ENCODE measurements at regions of chr1 and their contacts with region 1.

Region 1: DNA sequence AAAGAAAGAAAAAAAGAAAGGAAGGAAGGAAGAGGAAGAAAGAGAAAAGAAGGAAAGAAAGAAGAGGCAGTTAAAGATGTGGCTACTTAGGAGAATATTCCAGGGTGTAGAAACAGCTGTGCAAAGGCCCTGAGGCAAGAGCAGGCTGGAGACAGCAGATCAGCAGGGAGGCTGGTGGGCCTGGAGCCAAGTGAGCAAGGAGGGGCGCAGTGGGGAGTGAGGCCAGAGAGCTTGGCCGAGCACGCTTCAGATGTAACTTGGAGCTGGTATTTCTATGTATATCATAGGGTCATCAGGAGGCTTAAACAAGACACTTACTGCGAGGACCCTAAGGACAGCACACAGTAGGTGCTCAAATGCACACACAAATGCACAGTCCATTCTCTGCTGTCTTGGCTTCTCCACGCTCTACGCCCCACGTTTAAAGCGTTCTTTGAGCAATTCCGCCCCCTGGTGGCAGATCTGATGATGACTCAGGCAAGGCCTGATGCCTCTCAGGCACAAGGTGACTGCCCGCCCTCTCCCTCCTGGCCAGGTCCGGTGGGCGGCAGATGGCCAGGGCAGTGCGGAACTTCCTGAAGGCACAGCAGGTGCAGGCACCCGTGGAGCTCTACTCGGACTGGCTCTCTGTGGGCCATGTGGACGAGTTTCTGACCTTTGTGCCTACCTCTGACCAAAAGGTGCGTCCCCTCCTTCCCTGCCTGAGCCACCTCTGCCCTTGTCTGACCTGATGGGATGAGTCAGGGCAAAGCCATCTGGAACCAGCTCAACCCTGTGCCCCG is 11.9 kb upstream of the PADI3 start:
- DNase-seq: peak; percentile 97
- ATAC-seq: peak; percentile 42
- H3K4me3 ChIP-seq: no peak overlapping the region
- H3K27ac ChIP-seq: peak overlapping the region; percentile 7; the same call in 1 of the 2 replicates
- H3K4me1 ChIP-seq: peaks cover 33% of the 10 kb centered on the region
- H3K27me3 ChIP-seq: no peaks in the 10 kb centered on the region
- CTCF ChIP-seq: peak; percentile 91

Region 2: DNA sequence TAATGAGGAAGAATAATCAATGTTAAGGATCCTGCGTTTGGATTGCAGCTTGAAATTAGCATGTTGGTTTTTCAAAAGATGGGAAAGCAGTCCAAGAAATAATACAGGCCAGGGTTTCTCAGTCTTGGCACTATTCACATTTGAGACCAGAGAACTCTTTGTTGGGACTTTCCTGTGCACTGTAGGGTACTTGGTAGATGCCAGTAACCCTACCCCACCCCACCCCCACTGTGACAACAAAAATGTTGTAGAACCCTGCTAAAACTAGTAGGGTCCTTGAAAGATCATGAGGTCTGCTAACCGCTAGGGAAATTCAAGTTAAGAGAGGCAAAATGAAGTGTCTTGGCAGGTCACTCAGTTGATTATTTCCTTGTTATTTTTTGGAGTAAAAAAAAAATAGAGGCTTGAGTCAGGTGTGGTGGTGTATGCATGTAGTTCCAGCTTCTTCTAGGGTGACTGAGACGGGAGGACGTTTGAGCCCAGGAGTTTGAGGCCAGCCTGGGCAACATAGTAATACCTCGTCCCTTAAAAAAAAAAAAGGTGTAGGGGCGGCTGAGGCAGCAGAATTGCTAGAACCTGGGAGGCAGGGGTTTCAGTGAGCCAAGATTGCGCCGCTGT is 1336.2 kb before region 1 on chr1:
- CTCF ChIA-PET with region 1: no interaction called
- POLR2A ChIA-PET with region 1: no interaction called
- intact Hi-C with region 1: no loop called
- DNase-seq: no peak
- ATAC-seq: no peak
- H3K4me3 ChIP-seq: no peak overlapping the region
- H3K27ac ChIP-seq: no peak overlapping the region
- H3K4me1 ChIP-seq: peaks cover 22% of the 10 kb centered on the region
- H3K27me3 ChIP-seq: no peaks in the 10 kb centered on the region
- CTCF ChIP-seq: no peak

Region 3: GRCh38 chr1:17059739-17060460 is 177.1 kb before region 1 on chr1:
- CTCF ChIA-PET with region 1: interaction called, 3 read pairs
- POLR2A ChIA-PET with region 1: no interaction called
- intact Hi-C with region 1: loop called (anchors 1 kb)
- DNase-seq: peak; percentile 78
- ATAC-seq: peak; percentile 97
- H3K4me3 ChIP-seq: no peak overlapping the region
- H3K27ac ChIP-seq: no peak overlapping the region
- H3K4me1 ChIP-seq: 0 out of 2 replicates have a peak, but pooled peaks cover 5% of the 10 kb centered on the region
- H3K27me3 ChIP-seq: no peaks in the 10 kb centered on the region
- CTCF ChIP-seq: peak; percentile 86

Region 4: DNA sequence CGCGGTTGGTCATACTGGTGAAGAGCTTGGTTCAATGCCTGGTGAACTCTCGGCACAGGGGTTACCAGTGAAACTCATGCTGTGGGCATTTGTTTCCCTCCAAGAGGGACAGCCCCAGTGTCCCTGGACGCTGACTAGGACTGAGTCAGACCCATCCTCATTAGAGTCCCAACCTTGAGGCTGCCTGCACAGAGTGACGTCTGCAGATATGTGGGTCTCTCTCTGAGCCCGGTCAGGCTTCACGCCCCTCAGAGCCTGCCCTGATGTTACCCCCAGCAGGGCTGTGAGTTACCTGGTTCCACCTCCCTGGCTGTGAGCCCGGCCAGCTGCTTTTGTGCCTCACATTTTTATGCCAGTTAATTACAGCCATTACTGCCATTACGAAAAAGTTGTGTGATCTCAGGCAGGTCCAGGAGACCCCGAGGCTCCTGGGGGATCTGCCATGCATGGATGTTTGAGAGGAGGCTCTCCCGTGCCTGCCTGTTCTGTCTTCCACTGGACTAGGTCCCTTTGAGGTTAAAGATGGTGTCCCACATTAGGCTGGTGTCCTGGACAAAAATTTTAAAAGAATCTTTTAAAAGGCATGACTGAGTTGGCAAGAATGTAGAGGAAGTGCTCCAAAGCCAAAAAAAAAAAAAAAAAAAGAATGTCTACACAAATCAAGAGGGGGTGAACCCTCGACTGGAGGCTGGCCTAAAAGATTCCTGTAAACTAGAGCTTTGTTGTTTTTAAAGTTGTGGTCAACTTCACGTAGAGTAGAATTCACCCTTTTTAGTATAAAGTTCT is 68.7 kb before region 1 on chr1:
- CTCF ChIA-PET with region 1: no interaction called
- POLR2A ChIA-PET with region 1: no interaction called
- intact Hi-C with region 1: loop called (anchors 1 kb)
- DNase-seq: peak; percentile 88
- ATAC-seq: peak; percentile 77
- H3K4me3 ChIP-seq: peak overlapping the region; percentile 46
- H3K27ac ChIP-seq: peak overlapping the region; percentile 96
- H3K4me1 ChIP-seq: peaks cover 27% of the 10 kb centered on the region
- H3K27me3 ChIP-seq: no peaks in the 10 kb centered on the region
- CTCF ChIP-seq: no peak

Region 5: GRCh38 chr1:17207966-17208418 is 29.0 kb before region 1 on chr1:
- CTCF ChIA-PET with region 1: no interaction called
- POLR2A ChIA-PET with region 1: no interaction called
- intact Hi-C with region 1: loop called (anchors 2 kb)
- DNase-seq: peak; percentile 91
- ATAC-seq: peak; percentile 87
- H3K4me3 ChIP-seq: no peak overlapping the region
- H3K27ac ChIP-seq: peak overlapping the region; percentile 77
- H3K4me1 ChIP-seq: peaks cover 35% of the 10 kb centered on the region
- H3K27me3 ChIP-seq: no peaks in the 10 kb centered on the region
- CTCF ChIP-seq: no peak

Region 6: DNA sequence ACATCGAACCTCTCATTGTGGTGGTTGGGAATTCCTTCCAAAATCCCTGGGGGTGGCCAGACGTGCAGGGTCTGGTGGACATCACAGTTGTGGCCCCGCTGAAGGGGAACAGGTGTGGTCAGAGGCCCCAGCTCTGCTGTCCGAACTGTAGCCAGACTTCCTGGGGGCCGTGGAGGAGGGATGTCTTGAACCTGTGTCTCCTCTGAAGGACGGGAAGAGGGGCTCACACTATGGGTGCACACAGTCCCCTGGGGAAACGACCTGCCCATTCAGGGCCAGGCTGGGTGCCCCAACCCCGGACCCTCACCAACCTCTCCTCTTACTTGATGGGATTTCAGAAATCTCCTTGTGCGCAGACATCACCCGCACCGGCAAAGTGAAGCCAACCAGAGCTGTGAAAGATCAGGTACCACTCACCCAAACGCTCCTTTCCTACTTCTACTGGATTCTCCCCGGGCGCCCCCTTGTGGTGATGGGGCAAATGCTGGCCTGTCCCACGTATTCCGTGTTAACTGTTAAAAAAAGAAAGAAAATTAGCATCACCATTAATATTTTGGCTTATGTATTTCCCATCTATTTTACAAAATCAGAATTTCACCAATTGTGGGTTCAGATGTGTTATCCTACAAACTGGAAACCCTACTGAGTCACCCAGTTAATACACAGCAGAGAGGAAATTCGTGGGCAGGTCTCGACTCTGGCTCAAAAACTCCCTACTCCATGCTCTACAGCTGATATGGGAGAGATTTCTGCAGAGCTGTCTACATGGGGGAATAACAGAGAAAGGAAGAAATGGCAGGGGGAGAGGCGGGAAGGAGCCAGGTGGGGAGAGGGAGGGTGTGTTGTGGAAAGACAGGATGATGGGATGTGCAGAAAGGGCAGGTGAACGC is 99.1 kb after region 1 on chr1:
- CTCF ChIA-PET with region 1: interaction called, 3 read pairs
- POLR2A ChIA-PET with region 1: no interaction called
- intact Hi-C with region 1: loop called (anchors 1 kb)
- DNase-seq: peak; percentile 79
- ATAC-seq: peak; percentile 94
- H3K4me3 ChIP-seq: no peak overlapping the region
- H3K27ac ChIP-seq: no peak overlapping the region
- H3K4me1 ChIP-seq: peaks cover 4% of the 10 kb centered on the region; the same call in 1 of the 2 replicates
- H3K27me3 ChIP-seq: no peaks in the 10 kb centered on the region
- CTCF ChIP-seq: peak; percentile 95

Region 7: DNA sequence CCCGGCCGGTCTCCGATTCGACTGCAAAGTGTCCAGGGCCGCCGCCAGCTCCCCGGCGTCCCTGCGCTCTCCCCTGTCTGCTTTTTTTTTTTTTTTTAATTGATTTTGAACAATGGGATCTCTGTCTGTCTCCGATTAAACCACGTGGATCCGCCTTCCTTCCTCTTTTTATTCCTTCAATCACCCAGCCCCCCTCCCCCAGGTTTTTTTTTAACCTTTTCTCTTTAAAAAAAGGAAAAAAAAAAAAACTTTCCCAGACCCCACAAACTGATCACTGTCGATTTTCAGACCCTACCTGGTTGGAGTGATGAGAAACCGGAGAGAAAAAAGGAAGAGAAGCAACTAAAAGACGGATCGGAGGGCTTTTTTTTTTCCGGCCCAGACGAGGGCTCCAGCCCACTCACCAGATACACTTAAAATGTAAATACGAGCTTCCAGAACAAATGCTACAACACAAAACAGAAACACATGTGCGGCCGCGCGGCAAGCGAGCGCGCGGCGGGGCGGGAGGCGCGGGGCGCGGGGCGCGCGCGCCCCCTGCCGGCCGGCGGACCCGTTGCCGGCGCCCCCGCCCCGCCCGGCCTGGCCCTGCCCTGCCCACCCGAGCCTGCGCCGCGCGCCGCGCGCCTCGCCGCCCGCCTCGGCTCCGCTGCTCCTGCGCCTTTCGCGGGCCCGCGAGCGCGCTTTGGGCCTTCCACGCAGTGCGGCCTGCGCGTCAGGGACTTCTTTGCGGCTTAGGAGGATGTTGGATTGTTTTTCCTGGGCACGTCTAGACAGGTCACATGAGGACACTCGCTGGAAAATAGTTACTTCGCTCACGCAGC is 202.5 kb after region 1 on chr1 and contains the start of gene RCC2:
- CTCF ChIA-PET with region 1: no interaction called
- POLR2A ChIA-PET with region 1: no interaction called
- intact Hi-C with region 1: no loop called
- DNase-seq: peak; percentile 63
- ATAC-seq: peak; percentile 70
- H3K4me3 ChIP-seq: peak within 1 kb of the TSS; percentile 99
- H3K27ac ChIP-seq: peak within 1 kb of the TSS; percentile 90
- H3K4me1 ChIP-seq: peaks cover 43% of the 10 kb centered on the region
- H3K27me3 ChIP-seq: no peaks in the 10 kb centered on the region
- CTCF ChIP-seq: no peak
- total RNA-seq, gene RCC2: 82.7 and 95.2 TPM in 2 replicates

Region 8: GRCh38 chr1:18581420-18581880 is 1344.5 kb after region 1 on chr1:
- CTCF ChIA-PET with region 1: interaction called, 10 read pairs
- POLR2A ChIA-PET with region 1: no interaction called
- intact Hi-C with region 1: no loop called
- DNase-seq: peak; percentile 41
- ATAC-seq: peak; percentile 54; the same call in 1 of the 2 replicates
- H3K4me3 ChIP-seq: no peak overlapping the region
- H3K27ac ChIP-seq: no peak overlapping the region
- H3K4me1 ChIP-seq: no peaks in the 10 kb centered on the region; the same call in 1 of the 2 replicates
- H3K27me3 ChIP-seq: no peaks in the 10 kb centered on the region
- CTCF ChIP-seq: peak; percentile 70